Psoas muscle (tissue), 8 donors: ENCODE measurements at regions of chr9 and their contacts with region 1.

Region 1: GRCh38 chr9:36023260-36024048 is 13.3 kb upstream of the RECK start:
- DNase-seq: peak; percentile 39 to 64
- ATAC-seq: peak; percentile 70 to 84 (median 74)
- H3K4me3 ChIP-seq: no peak overlapping the region
- H3K27ac ChIP-seq: no peak overlapping the region
- H3K4me1 ChIP-seq: no peaks in the 10 kb centered on the region
- H3K27me3 ChIP-seq: no peaks in the 10 kb centered on the region
- CTCF ChIP-seq: peak; percentile 86

Region 2: DNA sequence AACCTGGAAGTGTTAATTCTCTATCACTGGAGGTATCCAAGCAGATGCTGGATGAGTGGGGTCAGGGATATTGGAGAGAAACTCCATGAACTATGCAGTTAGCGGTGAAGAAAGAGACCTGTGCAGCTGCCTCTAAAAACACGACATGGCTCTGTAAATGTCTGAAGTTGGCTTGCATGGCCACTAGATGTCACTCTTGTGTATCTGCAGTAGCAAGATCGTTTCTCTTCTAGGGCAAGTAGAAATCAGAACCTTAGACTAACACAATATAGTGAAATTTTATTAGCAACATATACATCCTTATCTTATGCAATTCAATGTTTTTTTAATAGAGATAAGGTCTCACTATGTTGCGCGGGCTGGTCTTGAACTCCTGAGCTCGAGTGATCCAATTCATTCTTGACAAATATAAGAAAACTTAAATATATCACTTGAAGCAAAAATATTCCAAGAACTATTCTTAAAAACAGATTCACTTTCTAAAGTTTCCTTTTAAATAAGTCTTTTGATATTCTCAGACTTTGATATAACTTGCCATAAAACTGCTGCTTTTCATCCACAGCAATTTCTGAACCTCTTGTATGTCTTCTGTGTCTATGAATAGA is 68.4 kb before region 1 on chr9:
- intact Hi-C with region 1: loop called (anchors 2 to 5 kb)
- DNase-seq: no peak
- ATAC-seq: peak; percentile 68 to 84 (median 79)
- H3K4me3 ChIP-seq: no peak overlapping the region
- H3K27ac ChIP-seq: no peak overlapping the region
- H3K4me1 ChIP-seq: no peaks in the 10 kb centered on the region
- H3K27me3 ChIP-seq: peaks cover 0 to 2% (median 0%) of the 10 kb centered on the region in 3 donors
- CTCF ChIP-seq: peak; percentile 88

Region 3: GRCh38 chr9:36080519-36080918 is 57.1 kb after region 1 on chr9:
- intact Hi-C with region 1: loop called in 1 of 2 experiments (anchors 10 kb)
- DNase-seq: no peak
- ATAC-seq: peak in 1 of 4 donors; percentile 10
- H3K4me3 ChIP-seq: no peak overlapping the region
- H3K27ac ChIP-seq: no peak overlapping the region
- H3K4me1 ChIP-seq: peaks cover under 1% of the 10 kb centered on the region
- H3K27me3 ChIP-seq: no peaks in the 10 kb centered on the region
- CTCF ChIP-seq: no peak

Region 4: DNA sequence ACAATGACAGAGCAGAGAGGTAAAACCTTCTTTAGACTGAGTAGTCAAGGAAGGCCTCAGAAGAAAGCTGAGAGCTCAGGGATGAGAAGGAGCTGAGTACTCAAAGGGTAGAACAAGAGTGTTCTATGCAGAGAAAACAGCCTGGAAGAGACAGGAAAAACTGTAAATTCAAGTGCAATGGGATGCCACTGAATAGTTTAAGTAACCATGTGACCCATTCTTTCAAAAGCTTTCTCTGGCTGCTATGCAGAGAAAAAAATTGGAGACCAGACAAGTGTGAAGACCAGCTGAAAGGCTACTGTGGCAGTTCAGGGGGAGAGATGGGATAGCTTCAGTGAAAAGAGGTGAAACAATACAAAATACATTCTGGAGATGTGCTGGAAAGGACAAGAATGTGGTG is 437.9 kb after region 1 on chr9:
- intact Hi-C with region 1: no loop called
- DNase-seq: no peak
- ATAC-seq: no peak
- H3K4me3 ChIP-seq: no peak overlapping the region
- H3K27ac ChIP-seq: no peak overlapping the region
- H3K4me1 ChIP-seq: peaks cover 3% of the 10 kb centered on the region
- H3K27me3 ChIP-seq: no peaks in the 10 kb centered on the region
- CTCF ChIP-seq: no peak